ENCODE measurements at regions of chr12 and their contacts with region 1.

Region 1: GRCh38 chr12:106136263-106136662 is 2.5 kb downstream of the NUAK1 start:
- DNase-seq: peak; percentile 75
- CTCF ChIP-seq: peak; percentile 83

Region 2: DNA sequence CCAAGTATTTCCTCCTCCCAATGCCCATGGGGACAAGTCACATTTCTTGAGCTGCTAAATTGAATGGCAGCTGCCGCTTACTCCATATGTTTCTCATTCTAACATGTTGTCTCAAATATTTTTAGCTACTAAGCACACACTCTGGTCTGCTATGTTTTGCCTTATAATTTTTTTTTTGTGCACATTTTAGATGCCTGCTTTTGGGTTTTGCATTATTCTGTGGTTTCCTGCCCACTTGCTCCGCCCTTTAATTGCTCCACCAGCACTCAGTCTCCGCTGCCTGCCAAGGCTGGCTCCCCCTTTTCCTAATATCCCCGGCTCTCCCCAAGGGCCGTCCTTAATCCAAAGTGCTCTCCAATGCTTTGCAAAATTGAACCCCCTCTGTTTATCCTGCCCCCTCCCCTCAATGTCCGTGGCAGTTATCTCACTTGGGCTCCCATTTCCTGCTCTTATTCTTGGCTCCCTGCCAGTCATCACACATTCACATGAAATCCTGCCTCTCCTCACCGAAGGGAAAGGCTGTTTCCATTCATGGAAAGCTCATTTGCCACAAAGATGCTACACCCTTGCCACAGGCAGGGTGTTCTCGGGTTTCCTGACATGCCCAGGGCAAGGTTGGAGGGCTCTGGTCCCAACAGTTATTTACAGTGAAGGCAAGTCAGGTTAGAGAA is 726.3 kb before region 1 on chr12:
- CTCF ChIA-PET with region 1: interaction called, 11 read pairs
- POLR2A ChIA-PET with region 1: no interaction called
- DNase-seq: no peak
- CTCF ChIP-seq: no peak

Region 3: DNA sequence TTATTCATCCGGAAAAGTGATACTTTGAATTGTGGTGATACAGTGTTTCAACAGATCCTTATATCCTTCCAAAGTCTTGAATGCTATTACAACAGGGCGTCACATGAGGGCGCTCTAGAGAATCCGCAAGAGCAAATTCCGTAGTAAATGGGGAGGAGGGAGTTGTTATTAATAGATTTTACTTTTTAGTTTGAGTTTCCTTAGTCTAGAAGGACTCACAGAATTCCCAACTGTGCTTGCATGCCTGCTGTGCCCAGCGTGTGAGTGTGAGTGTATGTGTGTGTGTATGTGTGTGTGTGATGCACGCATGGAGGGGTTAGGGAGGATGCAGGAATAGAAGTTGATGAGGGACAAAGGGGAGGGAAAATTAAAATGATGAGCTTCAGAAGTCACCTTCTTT is 430.5 kb before region 1 on chr12:
- CTCF ChIA-PET with region 1: interaction called, 17 read pairs
- POLR2A ChIA-PET with region 1: no interaction called
- DNase-seq: no peak
- CTCF ChIP-seq: peak; percentile 39

Region 4: DNA sequence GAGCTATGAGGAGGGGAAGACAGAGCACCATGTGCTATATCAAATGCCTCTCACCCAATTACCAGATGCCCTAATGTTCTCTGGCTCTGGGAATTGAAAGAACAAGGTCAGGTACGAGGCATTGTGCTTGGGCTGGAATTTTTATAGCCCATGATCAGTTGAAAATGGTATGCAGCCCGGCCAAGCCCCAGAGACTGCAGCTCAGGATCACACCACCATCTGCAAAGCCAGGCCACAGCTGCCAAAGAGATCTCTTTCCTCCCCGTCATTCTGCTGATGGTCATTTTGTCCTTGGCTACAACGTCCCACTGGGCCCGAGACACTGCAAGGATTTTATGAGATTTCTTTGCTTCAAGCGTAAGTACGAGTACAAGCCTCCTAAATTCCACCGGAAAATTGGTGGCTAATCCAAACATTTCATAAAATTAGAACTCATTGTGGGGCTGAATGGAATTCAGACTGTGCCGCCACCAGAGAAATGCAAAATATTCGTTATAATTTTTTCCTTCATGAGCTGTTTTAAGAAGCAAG is 12.6 kb before region 1 on chr12:
- CTCF ChIA-PET with region 1: interaction called, 36 read pairs
- POLR2A ChIA-PET with region 1: no interaction called
- DNase-seq: no peak
- CTCF ChIP-seq: no peak

Region 5: DNA sequence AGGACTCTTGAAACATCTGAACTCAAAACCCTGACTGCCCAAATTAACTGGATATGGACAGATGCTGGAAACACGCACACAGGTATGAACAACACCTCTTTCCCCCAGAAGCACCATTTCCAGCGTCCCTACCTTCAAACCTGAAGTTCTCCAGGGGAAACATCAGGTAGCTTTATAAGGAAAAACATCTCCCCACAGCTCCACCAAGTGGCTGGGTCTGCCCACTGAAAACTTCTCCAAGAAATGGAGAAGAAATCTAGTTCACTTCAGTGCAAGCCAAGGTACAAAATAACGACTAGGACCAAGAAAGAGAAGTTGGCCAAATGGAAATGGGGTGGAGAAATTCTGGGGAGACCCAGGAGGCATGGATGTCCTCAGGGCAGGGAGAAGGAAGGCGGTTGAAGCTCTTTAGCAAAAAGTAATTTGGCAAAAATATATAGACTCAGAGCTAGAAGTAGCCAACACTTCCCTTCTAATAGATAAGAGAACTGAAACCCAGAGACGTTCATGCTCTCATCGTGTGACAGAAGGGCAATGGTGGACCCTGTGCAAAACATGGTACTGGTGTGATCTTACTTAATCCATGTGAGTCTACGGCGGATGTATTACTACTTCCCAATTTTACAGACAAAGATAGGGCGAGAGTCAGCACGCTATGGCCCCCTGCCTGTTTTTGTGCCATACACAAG is 13.0 kb after region 1 on chr12:
- CTCF ChIA-PET with region 1: interaction called, 37 read pairs
- POLR2A ChIA-PET with region 1: no interaction called
- DNase-seq: no peak
- CTCF ChIP-seq: peak; percentile 38

Measured in GM10248 (cell line).